Activated CD4-positive, alpha-beta T cell treated with anti-CD3 and anti-CD28 coated beads for 36 hours (primary cell): ENCODE measurements at regions of chr3 and their contacts with region 1.

Region 1: GRCh38 chr3:142057331-142058085 is 91.8 kb downstream of the TFDP2 start:
- DNase-seq: no peak
- ATAC-seq: no peak
- H3K4me3 Mint-ChIP-seq: no peak overlapping the region
- H3K27ac Mint-ChIP-seq: no peak overlapping the region
- H3K4me1 Mint-ChIP-seq: peaks cover 9% of the 10 kb centered on the region
- H3K27me3 Mint-ChIP-seq: no peaks in the 10 kb centered on the region

Region 2: DNA sequence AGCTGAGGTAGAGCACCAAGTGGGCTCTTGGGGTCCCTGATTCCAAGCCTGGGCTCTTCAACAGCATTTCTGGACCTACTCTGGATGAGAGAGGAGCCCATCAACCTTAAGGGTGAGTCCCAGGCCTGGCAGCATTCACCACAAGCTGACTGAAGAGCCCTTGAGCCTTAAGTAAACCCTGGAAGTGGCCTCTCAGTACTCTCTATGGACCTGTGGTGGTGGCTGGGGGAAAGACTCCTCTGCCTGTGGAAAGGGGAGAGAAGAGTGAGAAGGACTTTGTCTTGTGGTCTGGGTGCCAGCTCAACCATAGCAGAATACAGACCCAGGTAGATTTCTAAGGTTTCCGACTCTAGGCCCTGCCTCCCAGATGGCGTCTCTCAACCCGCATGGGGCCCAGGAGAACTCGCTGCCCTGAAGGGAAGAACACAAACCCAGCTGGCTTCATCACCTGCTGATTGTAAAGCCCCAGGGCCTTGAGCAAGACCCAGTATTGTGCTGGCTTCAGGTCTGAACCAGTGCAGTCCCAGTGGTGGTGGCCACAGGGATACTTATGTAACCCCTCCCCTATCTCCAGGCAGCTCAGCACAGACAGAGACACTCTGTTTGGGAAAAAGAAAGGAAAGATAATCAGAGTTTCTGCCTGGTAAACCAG is 20.5 kb after region 1 on chr3:
- CTCF ChIA-PET with region 1: interaction called, 3 read pairs
- POLR2A ChIA-PET with region 1: no interaction called
- intact Hi-C with region 1: loop called in 1 of 2 experiments (anchors 2 kb)
- DNase-seq: no peak
- ATAC-seq: no peak
- H3K4me3 Mint-ChIP-seq: no peak overlapping the region
- H3K27ac Mint-ChIP-seq: no peak overlapping the region
- H3K4me1 Mint-ChIP-seq: no peaks in the 10 kb centered on the region
- H3K27me3 Mint-ChIP-seq: no peaks in the 10 kb centered on the region